Activated CD4-positive, alpha-beta T cell treated with anti-CD3 and anti-CD28 coated beads, Interleukin-2, amount 10 ng/mL, durations not matched to agents 24 days and 14 days (primary cell): ENCODE measurements at regions of chr18 and their contacts with region 1.

Region 1: DNA sequence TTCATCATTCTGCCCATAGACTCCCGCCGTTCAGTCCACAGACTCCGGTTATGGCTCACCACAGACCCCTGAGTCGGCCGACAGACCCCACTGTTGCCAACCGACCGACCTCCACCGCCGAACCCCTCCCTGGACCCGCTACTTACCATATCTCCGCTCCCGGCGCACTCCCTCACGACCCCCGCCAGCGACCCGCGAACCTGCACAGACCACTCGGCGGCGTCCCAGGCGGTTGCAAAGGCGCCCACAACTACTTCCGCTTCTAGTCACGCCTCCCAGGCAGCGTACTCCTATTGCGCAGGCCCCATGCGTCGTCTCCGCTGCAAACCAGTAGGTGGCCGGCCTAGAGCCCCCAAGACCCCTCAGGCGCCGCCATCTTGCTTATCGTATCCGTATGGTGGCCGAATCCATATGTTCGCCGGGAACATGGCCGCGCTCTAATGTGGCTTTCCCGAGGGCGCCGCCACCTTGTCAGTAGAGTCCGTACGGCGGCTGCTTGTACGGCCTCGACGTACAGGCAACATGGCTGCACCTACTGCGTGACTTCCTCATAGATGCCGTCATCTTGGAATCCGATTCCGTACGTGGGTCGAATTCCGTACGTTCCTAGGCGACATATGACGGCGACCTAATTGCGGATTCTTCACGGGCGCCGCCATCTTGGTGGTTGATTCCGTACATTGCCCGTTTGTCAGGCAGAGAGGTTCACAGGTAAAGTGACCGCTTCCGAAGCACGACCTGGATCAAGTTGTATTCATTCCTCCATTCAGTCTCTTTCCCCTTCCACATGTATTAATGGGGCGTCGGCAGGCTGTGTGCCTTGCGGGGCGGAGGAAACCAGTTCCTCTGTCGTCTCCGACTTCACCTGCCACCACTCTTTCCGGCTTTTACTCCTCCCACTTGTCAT is at the start of gene CXXC1:
- DNase-seq: peak; percentile 98
- H3K4me3 Mint-ChIP-seq: peak within 1 kb of the TSS; percentile 96
- H3K27ac Mint-ChIP-seq: peak within 1 kb of the TSS; percentile 94
- H3K4me1 Mint-ChIP-seq: peaks cover 29% of the 10 kb centered on the region
- H3K27me3 Mint-ChIP-seq: no peaks in the 10 kb centered on the region
- total RNA-seq, gene CXXC1: 102 and 105 TPM in 2 replicates

Region 2: GRCh38 chr18:49813319-49814146 is 474.2 kb before region 1 on chr18 and contains the start of gene ACAA2:
- intact Hi-C with region 1: loop called (anchors 5 kb)
- DNase-seq: peak; percentile 95
- H3K4me3 Mint-ChIP-seq: peak within 1 kb of the TSS; percentile 91
- H3K27ac Mint-ChIP-seq: peak within 1 kb of the TSS; percentile 95
- H3K4me1 Mint-ChIP-seq: peaks cover 54% of the 10 kb centered on the region
- H3K27me3 Mint-ChIP-seq: no peaks in the 10 kb centered on the region
- total RNA-seq, gene ACAA2: 69.7 and 72.1 TPM in 2 replicates

Region 3: GRCh38 chr18:50297621-50298442 is 10.1 kb after region 1 on chr18:
- intact Hi-C with region 1: loop called (anchors 1 kb)
- DNase-seq: peak; percentile 92
- H3K4me3 Mint-ChIP-seq: peak overlapping the region; percentile 80
- H3K27ac Mint-ChIP-seq: no peak overlapping the region
- H3K4me1 Mint-ChIP-seq: peaks cover 8% of the 10 kb centered on the region
- H3K27me3 Mint-ChIP-seq: peaks cover 42% of the 10 kb centered on the region

Region 4: GRCh38 chr18:50356036-50356945 is 68.6 kb after region 1 on chr18:
- intact Hi-C with region 1: loop called (anchors 1 kb)
- DNase-seq: peak; percentile 63
- H3K4me3 Mint-ChIP-seq: no peak overlapping the region
- H3K27ac Mint-ChIP-seq: peak overlapping the region; percentile 15
- H3K4me1 Mint-ChIP-seq: peaks cover 8% of the 10 kb centered on the region
- H3K27me3 Mint-ChIP-seq: peaks cover 29% of the 10 kb centered on the region

Region 5: DNA sequence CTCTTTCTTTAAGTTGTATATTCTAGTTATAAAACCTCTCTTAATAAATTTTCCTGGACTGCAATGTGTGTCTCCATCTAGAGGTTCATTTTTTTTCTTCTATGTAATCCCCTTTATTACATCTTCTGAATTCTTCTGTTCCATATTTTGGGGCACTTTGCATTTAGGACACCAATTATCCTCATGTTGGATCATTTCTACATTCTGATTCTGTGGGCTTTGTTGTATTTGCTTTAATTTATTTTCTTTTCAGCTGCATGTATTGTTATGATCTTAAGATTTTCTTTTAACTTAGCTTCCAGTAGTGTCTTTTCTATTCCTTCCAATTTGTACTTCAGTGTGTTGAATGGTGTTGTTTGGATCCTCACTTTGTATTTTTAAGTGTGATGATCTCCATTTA is 82.0 kb after region 1 on chr18:
- intact Hi-C with region 1: no loop called
- DNase-seq: no peak
- H3K4me3 Mint-ChIP-seq: no peak overlapping the region
- H3K27ac Mint-ChIP-seq: no peak overlapping the region
- H3K4me1 Mint-ChIP-seq: peaks cover 5% of the 10 kb centered on the region
- H3K27me3 Mint-ChIP-seq: peaks cover 33% of the 10 kb centered on the region

Region 6: DNA sequence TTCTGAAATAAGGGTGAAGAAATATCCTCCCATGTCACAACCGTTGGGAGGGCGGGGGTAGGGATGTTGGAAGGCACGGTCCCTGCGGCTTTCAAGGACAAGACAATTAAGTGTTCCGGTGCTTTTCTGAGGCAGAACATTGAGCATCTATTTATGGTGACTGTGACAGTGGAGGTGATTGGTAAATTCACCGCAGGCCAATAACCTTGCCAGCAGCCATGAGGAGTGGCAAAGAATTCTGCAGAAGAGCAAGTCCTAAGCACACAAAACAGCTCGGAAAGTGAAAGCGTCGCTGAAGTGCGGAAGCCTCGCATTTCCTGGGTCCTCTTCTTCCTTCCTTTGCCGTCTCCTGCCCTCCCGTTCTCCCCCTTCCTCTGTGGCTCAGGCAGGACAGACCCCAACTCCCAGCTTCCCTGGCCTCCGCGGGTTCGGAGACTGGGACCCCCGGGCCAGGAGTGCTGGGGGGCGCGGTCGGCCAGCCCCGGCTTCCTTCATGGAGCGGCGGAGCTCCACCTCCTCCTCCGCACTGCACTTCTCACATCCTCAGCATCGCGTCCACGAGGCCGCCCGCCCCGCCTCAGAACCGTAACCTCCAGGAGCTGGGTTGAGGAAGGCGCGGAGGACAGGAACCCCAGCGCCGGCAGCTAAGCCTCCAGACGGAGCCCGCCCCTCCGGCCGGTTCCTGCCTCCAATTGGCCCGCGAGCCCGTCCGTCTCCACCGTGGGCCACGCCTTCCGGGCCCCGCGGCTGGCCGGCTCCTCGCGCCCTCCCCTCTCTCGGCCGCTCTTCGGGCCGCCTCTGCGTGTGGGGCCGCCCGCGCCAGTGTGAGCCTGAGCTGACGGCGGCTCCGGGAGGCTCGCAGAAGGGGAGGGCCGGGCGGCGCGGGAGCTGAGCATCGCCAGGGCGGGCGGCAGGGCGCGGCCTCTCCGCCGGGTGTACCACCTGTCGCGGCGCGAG is 590.9 kb after region 1 on chr18 and contains the start of gene ME2:
- intact Hi-C with region 1: loop called (anchors 5 kb)
- DNase-seq: peak; percentile 98
- H3K4me3 Mint-ChIP-seq: peak within 1 kb of the TSS; percentile 95
- H3K27ac Mint-ChIP-seq: peak within 1 kb of the TSS; percentile 99
- H3K4me1 Mint-ChIP-seq: peaks cover 24% of the 10 kb centered on the region
- H3K27me3 Mint-ChIP-seq: peaks cover 4% of the 10 kb centered on the region
- total RNA-seq, gene ME2: 141 and 143 TPM in 2 replicates

Region 7: DNA sequence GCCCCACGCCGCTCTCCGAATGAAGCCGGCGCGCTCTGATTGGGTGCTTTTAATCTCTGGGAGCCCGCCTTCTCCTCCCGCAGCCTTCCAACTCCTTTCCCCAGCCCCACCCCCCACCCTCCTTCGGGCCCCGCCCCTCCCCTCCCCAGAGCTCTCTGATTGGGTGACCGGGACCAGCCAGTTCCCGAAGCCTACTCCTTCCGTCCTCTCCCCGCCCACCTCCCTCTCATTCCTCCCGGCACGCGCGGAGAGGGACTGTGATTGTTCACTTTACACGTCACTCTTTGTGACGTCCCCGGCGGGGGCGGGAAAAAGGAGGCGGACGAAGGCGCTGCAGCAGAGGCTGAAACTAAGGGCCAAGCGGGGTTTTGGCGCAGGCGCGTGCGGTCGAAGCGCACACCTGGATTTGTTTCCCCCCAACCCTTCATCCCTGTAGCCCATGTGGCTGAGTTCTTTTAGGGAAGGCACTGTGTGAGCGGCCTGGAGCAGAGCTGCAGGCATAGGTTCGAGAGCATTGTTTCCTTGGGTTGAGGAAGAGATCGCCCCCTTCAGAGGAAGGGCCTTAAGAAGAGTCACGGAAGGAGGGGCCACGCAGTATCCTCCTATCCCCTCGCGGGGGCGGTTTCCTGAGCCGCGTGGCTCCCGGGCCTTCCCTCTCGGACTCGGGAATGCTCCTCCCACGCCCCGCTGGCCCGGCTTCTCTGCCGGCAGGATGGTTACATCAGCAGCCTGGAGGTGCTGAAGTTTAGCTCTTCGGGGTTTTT is 910.1 kb after region 1 on chr18 and contains the start of gene MEX3C:
- intact Hi-C with region 1: loop called (anchors 5 kb)
- DNase-seq: peak; percentile 100
- H3K4me3 Mint-ChIP-seq: peak within 1 kb of the TSS; percentile 94
- H3K27ac Mint-ChIP-seq: peak within 1 kb of the TSS; percentile 98
- H3K4me1 Mint-ChIP-seq: peaks cover 21% of the 10 kb centered on the region
- H3K27me3 Mint-ChIP-seq: no peaks in the 10 kb centered on the region
- total RNA-seq, gene MEX3C: 57.4 and 62.6 TPM in 2 replicates